ENCODE measurements at regions of chr1 and their contacts with region 1.

Region 1: DNA sequence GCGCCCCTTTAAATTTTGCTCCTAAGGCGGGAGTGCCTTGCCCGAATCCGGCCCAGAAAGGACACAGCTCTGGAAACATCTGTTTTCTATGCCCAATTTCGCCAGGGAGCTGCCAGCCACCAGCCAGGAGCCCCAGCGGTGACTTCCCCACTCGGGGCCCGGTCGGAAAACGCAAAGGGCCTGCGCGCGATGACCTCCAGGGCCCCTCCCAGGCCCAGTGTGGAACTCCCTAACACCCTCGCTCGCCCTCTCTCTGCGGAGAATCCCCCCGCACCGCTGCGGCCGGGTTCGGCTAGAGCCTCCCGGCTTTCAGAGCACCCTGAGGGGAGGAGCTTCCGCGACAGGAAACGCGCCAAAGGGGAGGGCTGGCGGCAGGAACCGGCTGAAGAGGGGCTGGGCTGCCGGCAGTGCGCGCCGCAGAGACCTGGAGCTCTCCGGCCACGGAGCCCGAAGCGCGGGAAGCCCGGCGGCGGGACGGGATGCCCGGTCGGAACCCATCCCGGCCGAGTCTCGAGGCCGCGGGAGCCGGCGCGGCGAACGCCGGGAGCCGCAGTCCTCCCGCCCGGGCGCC is 505 bp downstream of the CLSPN start:
- DNase-seq: peak; percentile 89
- ATAC-seq: peak; percentile 84
- H3K4me3 Mint-ChIP-seq: peak overlapping the region; percentile 100
- H3K27ac Mint-ChIP-seq: peak overlapping the region; percentile 85
- H3K4me1 Mint-ChIP-seq: peaks cover 22% of the 10 kb centered on the region
- H3K27me3 Mint-ChIP-seq: no peaks in the 10 kb centered on the region

Region 2: GRCh38 chr1:35557292-35558063 is 211.8 kb before region 1 on chr1 and contains the starts of genes KIAA0319L and NCDN:
- POLR2A ChIA-PET with region 1: interaction called, 12 read pairs
- DNase-seq: peak; percentile 94
- ATAC-seq: peak; percentile 95
- H3K4me3 Mint-ChIP-seq: peak within 1 kb of the TSS; percentile 92
- H3K27ac Mint-ChIP-seq: peak within 1 kb of the TSS; percentile 96
- H3K4me1 Mint-ChIP-seq: peaks cover 33% of the 10 kb centered on the region
- H3K27me3 Mint-ChIP-seq: no peaks in the 10 kb centered on the region
- total RNA-seq, gene KIAA0319L: 49.8 to 51.8 TPM
- total RNA-seq, gene NCDN: 21.5 to 23.2 TPM

Region 3: GRCh38 chr1:35577071-35577998 is 191.9 kb before region 1 on chr1:
- POLR2A ChIA-PET with region 1: interaction called, 23 read pairs
- DNase-seq: peak; percentile 83
- ATAC-seq: peak; percentile 87
- H3K4me3 Mint-ChIP-seq: peak overlapping the region; percentile 89
- H3K27ac Mint-ChIP-seq: peak overlapping the region; percentile 92
- H3K4me1 Mint-ChIP-seq: peaks cover 24% of the 10 kb centered on the region
- H3K27me3 Mint-ChIP-seq: peaks cover 15% of the 10 kb centered on the region

Region 4: GRCh38 chr1:35683012-35683411 is 86.3 kb before region 1 on chr1:
- POLR2A ChIA-PET with region 1: no interaction called
- DNase-seq: no peak
- ATAC-seq: no peak
- H3K4me3 Mint-ChIP-seq: no peak overlapping the region
- H3K27ac Mint-ChIP-seq: no peak overlapping the region
- H3K4me1 Mint-ChIP-seq: no peaks in the 10 kb centered on the region
- H3K27me3 Mint-ChIP-seq: peaks cover 30% of the 10 kb centered on the region

Region 5: DNA sequence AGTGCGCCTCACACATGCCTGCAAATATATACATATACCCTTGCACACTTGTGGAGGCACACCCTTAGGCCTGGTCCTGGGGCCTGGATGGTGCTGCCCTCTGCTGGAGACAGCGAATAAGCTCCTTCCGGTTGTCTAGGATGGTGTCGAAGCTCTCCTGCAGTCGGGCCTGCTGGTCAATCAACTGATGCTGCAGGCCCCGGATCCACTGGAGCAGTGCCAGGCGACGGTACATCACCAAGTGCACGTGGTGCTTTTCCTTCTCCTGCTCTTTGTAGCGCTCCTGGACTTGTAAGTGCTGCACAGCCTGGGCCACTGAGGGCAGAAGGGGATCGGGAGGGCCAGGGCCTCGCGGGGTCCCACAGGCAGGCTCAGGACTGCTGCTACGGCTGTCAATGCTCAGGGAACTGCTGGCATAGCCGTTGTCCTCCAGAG is 53.7 kb before region 1 on chr1:
- POLR2A ChIA-PET with region 1: interaction called, 11 read pairs
- DNase-seq: peak; percentile 83
- ATAC-seq: peak; percentile 65
- H3K4me3 Mint-ChIP-seq: peak overlapping the region; percentile 10
- H3K27ac Mint-ChIP-seq: peak overlapping the region; percentile 69
- H3K4me1 Mint-ChIP-seq: peaks cover 30% of the 10 kb centered on the region
- H3K27me3 Mint-ChIP-seq: no peaks in the 10 kb centered on the region

Region 6: GRCh38 chr1:35753626-35754260 is 15.5 kb before region 1 on chr1:
- POLR2A ChIA-PET with region 1: interaction called, 10 read pairs
- DNase-seq: no peak
- ATAC-seq: no peak
- H3K4me3 Mint-ChIP-seq: no peak overlapping the region
- H3K27ac Mint-ChIP-seq: no peak overlapping the region
- H3K4me1 Mint-ChIP-seq: peaks cover 4% of the 10 kb centered on the region
- H3K27me3 Mint-ChIP-seq: no peaks in the 10 kb centered on the region

Region 7: GRCh38 chr1:35807614-35808449 is 38.6 kb after region 1 on chr1 and contains the start of gene AGO4:
- POLR2A ChIA-PET with region 1: interaction called, 13 read pairs
- DNase-seq: peak; percentile 71
- ATAC-seq: peak; percentile 55
- H3K4me3 Mint-ChIP-seq: peak within 1 kb of the TSS; percentile 92
- H3K27ac Mint-ChIP-seq: peak within 1 kb of the TSS; percentile 92
- H3K4me1 Mint-ChIP-seq: peaks cover 21% of the 10 kb centered on the region
- H3K27me3 Mint-ChIP-seq: no peaks in the 10 kb centered on the region
- total RNA-seq, gene AGO4: 18.6 to 23.9 TPM

Measured in activated naive CD8-positive, alpha-beta T cell treated with anti-CD3 and anti-CD28 coated beads, Interleukin-2, amount 10 ng/mL, durations not matched to agents 7 days and 5 days (primary cell).